GM10248 (cell line): ENCODE measurements at regions of chr1 and their contacts with region 1.

Region 1: GRCh38 chr1:175146529-175147213 is 45.9 kb downstream of the KIAA0040 start:
- DNase-seq: peak; percentile 82
- CTCF ChIP-seq: peak; percentile 95

Region 2: GRCh38 chr1:174953285-174954072 is 193.2 kb before region 1 on chr1:
- CTCF ChIA-PET with region 1: no interaction called
- POLR2A ChIA-PET with region 1: no interaction called
- DNase-seq: no peak
- CTCF ChIP-seq: no peak

Region 3: GRCh38 chr1:175023043-175023921 is 123.4 kb before region 1 on chr1 and contains the start of gene MRPS14:
- CTCF ChIA-PET with region 1: interaction called, 43 read pairs
- POLR2A ChIA-PET with region 1: no interaction called
- DNase-seq: peak; percentile 96
- CTCF ChIP-seq: no peak

Region 4: DNA sequence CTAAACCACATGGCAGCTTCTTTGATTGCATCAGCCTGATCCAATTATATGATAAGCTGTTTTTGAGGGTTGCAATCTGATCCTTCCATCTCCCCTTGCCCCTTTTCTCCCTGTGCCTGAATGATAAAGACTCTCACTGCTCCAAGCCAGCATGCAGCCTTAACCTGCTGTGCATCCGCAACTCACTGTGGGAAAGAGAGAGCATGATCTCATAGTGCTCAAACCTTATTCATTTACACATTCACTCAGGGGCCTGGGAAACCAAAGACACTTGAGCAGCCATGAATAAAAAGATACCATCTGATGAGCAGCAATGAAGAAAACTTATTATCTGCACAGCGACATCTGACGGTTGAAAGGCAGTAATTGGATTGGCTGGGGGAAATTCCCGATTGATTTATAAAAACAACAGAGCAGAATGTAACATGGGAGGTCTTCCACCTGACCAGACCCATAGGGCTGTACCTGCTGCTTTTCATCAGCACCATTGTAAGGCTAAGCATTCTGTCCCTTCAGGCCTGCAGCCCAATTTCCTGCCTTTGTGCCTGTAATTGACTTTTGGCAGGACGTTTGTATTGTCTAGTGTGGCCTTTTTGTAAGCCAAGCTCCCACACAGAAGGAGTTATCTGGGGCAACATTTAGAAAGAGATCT is 16.5 kb before region 1 on chr1:
- CTCF ChIA-PET with region 1: interaction called, 289 read pairs
- POLR2A ChIA-PET with region 1: interaction called, 3 read pairs
- DNase-seq: no peak
- CTCF ChIP-seq: no peak

Region 5: GRCh38 chr1:175174309-175175165 is 27.9 kb after region 1 on chr1:
- CTCF ChIA-PET with region 1: interaction called, 19 read pairs
- POLR2A ChIA-PET with region 1: no interaction called
- DNase-seq: peak; percentile 27
- CTCF ChIP-seq: no peak

Region 6: DNA sequence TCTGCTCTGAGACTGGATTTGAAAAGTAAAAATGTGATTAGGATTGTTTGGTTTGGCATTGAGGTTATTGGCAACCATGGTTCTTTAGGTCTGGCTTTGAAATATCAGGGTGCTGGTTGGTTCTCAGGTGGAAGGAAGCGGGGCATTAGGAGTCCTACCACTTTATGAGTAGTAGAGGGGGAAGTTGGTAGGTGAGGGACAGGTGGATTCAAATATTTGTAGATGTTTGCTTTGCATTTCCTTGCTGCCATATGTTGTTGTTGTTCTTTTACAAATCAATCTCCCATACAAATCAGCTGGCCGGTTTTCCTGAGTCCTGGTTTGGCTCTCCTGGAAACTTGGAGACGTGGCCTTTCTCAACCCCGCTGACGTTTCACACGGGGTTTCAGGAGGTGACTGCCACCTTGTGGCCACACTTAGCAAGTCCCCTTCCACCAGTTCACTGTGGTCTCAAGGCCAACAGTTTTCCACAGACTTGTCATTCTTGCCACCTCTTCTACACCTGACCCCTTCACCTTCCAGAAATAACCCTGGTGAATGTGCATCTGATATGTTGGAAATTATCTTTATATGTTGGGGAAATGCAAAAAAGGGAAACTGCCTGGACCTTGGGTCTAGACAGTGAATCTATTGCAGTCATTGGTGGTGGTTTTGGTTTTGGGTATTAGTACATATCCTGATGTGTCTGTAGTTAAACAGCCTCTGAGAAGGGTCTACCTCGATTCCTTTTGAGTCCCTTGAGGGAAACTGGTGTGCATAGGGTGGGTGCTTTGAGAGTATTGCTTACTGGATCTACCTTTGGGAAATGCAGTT is 173.0 kb after region 1 on chr1:
- CTCF ChIA-PET with region 1: interaction called, 431 read pairs
- POLR2A ChIA-PET with region 1: no interaction called
- DNase-seq: peak; percentile 71
- CTCF ChIP-seq: peak; percentile 90

Region 7: DNA sequence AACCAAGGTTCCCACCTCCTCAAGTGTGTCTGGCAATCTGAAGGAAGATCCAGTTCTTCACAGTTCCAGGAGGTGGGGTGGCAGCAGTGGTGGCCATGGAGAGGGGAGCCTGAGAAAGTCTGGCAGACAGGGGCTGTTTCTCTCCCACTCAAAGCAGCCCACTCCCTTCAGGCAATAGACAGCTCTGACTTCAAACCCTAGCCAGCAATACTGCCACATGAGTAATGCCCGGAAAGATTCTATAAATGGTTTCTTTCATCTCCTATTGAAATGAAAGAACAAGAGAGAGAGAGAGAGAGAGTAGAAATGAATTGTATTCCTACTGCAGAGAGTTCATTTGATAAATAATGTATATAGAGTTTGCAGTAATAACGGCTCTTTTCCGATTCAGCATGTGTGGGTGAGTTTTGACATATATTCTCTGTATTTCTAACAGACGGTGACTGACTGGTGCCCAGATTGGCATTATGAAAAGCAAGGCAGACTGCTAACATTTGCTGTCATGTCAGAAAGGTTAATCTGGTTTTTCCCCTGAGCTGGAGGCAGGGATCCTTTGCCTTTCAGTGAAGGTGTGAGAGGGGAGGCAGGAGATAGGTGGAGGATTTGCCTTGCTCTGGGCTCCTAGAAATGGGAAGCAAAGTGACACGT is 313.0 kb after region 1 on chr1:
- CTCF ChIA-PET with region 1: no interaction called
- POLR2A ChIA-PET with region 1: no interaction called
- DNase-seq: no peak
- CTCF ChIP-seq: no peak